Prostate gland (tissue), 2 donors: ENCODE measurements at regions of chr7 and their contacts with region 1.

Region 1: GRCh38 chr7:73578342-73579127 is at the start of gene TBL2:
- DNase-seq: peak; percentile 99
- H3K4me3 ChIP-seq: peak within 1 kb of the TSS; percentile 58 to 83
- H3K27ac ChIP-seq: peak within 1 kb of the TSS; percentile 82 to 86
- H3K4me1 ChIP-seq: no peaks in the 10 kb centered on the region
- H3K27me3 ChIP-seq: no peaks in the 10 kb centered on the region
- CTCF ChIP-seq: peak in 2 of 4 experiments; percentile 8 to 15
- POLR2A ChIP-seq: peak; percentile 92
- total RNA-seq, gene TBL2: 73.5 to 112 TPM

Region 2: DNA sequence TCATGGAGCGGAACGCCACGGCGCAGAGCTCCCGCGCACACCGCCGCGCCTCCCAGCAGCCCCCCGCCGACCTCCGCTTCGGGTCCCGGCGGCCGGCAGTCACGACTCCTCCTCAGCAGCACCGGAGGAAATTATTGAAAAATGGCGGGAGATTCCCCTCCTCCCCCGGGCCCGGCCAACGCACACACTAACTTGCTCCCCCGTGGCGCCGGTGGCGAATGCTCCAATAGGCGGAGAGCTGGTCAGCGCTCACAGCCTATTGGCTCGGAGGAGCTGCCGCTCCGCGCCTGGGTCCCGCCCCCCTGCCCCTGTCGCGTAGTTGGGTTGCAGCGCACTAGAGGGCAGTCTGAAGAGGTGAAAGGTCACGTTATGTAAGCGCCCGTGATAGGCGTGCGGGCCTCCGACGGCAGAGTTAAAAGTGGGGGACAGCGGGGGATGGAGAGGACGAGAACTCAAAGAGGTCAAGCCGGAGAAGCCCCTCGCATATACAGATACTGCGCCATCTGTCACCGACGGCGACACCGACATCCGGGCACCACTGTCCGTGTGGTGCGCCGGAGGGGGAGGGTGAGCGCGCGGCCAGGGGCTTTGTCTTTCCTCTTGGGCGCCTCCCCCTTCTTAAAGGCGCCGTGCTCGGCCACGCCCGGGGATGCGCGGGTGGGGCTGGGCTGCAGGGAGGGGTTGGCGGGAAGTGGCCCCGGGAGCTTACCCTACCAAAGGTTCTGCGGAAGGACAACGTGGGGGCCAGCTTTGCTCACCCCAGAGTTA is 56.2 kb before region 1 on chr7 and contains the start of gene BAZ1B:
- intact Hi-C with region 1: loop called (anchors 5 kb)
- DNase-seq: peak; percentile 97
- H3K4me3 ChIP-seq: peak within 1 kb of the TSS; percentile 65 to 94
- H3K27ac ChIP-seq: peak within 1 kb of the TSS; percentile 86 to 93
- H3K4me1 ChIP-seq: peaks cover 9% of the 10 kb centered on the region
- H3K27me3 ChIP-seq: no peaks in the 10 kb centered on the region
- CTCF ChIP-seq: peak in 2 of 4 experiments; percentile 18 to 33
- POLR2A ChIP-seq: peak; percentile 67
- total RNA-seq, gene BAZ1B: 43.4 to 56.4 TPM

Region 3: GRCh38 chr7:73557108-73557396 is 21.5 kb before region 1 on chr7:
- intact Hi-C with region 1: loop called (anchors 2 kb)
- DNase-seq: peak; percentile 91
- H3K4me3 ChIP-seq: peak overlapping the region; percentile 92 to 97
- H3K27ac ChIP-seq: peak overlapping the region; percentile 98 to 100
- H3K4me1 ChIP-seq: no peaks in the 10 kb centered on the region
- H3K27me3 ChIP-seq: no peaks in the 10 kb centered on the region
- CTCF ChIP-seq: peak in 1 of 4 experiments; percentile 13
- POLR2A ChIP-seq: no peak

Region 4: GRCh38 chr7:74240482-74240881 is 661.9 kb after region 1 on chr7:
- intact Hi-C with region 1: no loop called
- DNase-seq: no peak
- H3K4me3 ChIP-seq: no peak overlapping the region
- H3K27ac ChIP-seq: no peak overlapping the region
- H3K4me1 ChIP-seq: no peaks in the 10 kb centered on the region
- H3K27me3 ChIP-seq: no peaks in the 10 kb centered on the region
- CTCF ChIP-seq: no peak
- POLR2A ChIP-seq: no peak